ENCODE measurements at regions of chr10 and their contacts with region 1.

Region 1: GRCh38 chr10:45594276-45595106 is 78.1 kb downstream of the ZFAND4 start:
- DNase-seq: peak; percentile 86 to 99 (median 90)

Region 2: GRCh38 chr10:45379951-45380461 is 214.5 kb before region 1 on chr10:
- intact Hi-C with region 1: no loop called
- DNase-seq: peak in 2 of 10 donors; percentile 62 to 80

Region 3: GRCh38 chr10:45514291-45515270 is 79.9 kb before region 1 on chr10:
- intact Hi-C with region 1: loop called (anchors 5 kb)
- DNase-seq: peak; percentile 42 to 96 (median 62)

Region 4: DNA sequence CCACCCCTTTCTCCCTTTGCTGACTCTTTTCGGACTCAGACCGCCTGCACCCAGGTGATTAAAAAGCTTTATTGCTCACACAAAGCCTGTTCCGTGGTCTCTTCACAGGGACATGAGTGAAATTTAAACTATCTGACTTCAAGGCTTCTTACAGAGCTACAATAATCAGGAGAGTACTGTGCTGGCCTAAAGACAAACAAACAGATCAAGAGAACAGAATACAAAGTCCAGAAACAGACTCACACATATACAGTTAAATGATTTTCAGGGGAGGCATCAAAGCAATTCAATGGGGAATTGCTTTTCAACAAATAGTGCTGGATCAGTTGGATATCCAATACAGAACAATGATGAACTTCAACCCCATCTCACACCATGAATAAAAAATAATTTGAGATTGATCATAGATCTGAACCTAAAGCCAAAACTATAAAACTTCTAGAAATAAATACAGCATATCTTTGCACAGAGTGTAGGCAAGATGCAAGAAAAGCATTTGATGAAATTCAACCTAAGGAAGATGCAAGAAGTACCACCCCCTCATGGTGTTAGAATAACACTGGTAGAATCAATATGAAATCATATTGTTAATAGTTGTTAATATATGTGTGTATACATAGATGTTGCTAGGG is 18.4 kb before region 1 on chr10:
- intact Hi-C with region 1: no loop called
- DNase-seq: no peak

Region 5: DNA sequence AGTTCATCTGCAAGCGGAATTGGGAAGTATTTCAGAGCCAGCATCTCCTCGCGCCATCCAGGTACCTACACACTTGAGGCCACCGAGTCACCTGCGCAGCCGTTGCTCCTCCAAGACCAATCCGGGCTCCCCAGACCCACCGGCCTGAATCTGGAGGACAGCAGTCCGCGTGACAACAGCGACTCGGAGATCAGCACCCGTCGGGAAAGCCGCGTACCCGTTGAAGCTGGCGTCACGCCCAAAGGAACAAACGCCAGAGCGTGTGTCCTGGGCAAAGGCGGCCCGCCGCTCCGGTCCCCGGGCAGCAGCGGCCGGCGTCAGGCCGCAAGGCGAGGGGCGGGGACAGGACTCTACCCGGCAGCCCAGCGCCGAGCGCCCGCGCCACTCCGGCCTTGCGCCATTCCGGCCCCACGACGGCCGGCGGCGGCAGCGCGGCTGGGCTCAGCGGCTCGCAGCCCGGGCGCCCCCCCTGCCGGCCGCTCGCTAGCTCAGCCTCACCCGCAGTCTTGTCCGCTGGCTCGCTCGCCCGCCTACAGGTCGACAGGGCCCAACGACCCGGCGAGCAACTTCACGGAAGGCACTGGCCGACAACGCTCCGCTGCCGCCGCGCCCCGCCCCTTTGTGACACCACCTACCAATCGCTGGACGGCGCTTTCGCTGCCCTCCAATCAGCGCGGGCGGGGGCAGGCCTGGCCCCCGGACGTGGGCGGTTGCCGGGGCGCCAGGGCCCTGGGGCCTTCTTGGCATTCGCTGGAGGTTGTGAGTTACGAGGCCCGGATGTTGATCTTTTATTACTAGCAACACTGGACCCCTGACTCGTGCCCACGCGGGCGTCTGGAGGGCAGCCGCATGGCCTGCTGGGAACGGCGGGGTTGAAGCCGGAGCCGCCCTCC is 77.9 kb after region 1 on chr10 and contains the start of gene ZFAND4:
- intact Hi-C with region 1: loop called (anchors 5 kb)
- DNase-seq: peak; percentile 88 to 99 (median 93)

Region 6: DNA sequence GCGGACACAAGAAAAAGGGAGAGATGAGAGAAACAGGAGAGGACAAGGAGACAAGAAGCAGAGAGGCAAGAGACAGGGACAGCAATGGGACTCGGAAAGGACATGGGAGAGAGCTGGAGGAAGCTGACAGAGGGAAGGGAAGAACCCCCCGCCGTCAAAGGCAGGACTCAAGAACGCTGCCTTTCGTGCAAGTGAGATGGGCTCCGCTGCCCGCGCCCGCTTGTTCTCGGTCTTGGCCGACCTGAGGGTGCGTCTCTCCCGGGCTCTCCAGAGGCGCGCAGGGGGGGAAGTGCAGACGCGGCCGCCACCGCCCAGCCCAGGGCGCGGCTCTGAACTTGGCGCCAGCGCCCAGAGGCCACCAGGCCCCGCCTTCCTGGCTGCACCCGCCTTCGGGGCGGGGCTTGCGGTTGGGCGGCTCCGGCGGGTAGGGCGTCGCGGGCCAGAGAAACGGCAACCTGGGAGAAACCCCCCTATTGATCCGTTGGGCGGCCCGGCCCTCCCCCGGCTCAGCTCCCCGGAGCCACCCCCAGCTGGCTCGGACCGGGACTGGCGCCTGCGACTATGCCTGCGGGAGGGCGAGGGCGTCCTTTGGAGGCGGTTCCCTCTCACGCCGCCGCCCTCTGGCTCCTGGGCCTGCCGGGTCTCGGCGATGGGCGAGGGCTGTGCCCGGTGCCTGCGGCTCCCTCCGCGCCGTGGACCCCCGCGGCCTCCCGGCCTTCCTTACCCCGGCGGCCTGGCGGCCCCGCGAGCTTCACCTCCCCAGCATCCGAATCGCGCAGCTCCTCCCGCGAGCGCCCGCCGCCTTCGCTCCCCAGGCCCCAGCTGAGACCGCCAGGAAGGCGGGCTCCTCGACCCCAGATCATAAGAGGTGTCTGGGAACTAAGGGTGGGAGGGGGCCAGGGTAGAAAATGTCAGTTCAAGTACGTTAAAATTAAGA is 690.1 kb after region 1 on chr10:
- intact Hi-C with region 1: no loop called
- DNase-seq: peak; percentile 58 to 97 (median 82)